ENCODE measurements at regions of chr1 and their contacts with region 1.

Region 1: DNA sequence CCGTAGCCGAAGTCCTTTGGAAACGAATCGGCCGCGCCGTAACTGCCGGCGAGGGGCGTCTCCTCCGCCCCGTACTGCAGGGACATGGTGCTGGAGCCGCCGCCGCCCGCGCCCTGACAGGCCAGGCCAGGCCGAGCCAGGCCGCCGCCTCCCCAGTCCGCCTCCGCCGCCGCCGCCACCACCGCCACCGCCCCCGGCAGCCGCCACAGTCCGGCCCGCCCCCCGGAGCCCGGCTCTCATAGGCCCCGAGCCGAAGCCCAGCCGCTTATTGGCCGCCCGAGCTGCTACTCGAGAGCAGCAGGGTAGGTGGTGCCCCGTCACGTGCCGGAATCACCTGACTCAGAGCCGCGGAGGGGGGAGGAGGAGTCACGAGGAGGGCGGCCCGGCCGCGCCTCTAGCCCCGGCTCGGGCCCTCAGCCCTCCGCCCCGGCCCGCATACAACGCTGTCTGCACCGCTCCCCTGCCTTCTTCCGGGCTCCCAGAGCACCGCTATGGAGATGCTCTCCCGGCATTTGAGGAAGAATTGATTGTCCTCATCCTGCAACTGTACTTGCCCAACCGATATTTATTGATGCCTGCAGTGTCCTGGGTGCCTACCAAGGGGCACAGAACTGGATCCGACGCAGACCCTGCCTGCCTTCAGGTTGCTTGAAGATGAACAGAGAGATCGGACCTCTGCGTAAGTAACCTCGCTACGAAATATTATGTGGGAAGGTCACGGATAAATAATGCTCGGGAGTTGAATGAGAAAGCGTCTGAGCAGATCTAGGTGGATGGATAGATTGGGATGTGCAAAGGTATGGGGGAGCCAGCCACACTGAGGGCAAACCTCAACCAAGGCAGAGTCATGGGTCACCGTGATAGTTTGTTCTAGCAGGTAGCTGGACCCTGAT is at the start of gene RRAGC:
- DNase-seq: peak; percentile 100
- ATAC-seq: peak; percentile 96 to 99 (median 98)
- H3K4me3 ChIP-seq: peak within 1 kb of the TSS; percentile 81 to 99 (median 92)
- H3K27ac ChIP-seq: peak within 1 kb of the TSS; percentile 56 to 96 (median 88)
- H3K4me1 ChIP-seq: peaks cover 2 to 75% (median 48%) of the 10 kb centered on the region in 12 donors
- H3K27me3 ChIP-seq: no peaks in the 10 kb centered on the region
- CTCF ChIP-seq: no peak
- POLR2A ChIP-seq: peak in 1 of 2 donors; percentile 63
- total RNA-seq, gene RRAGC: 14.4 to 32.8 (median 22.3) TPM

Region 2: GRCh38 chr1:38990738-38991639 is 131.2 kb after region 1 on chr1 and contains the start of gene AKIRIN1:
- intact Hi-C with region 1: loop called in 3 of 10 experiments (anchors 5 to 10 kb)
- DNase-seq: peak; percentile 98 to 100 (median 99)
- ATAC-seq: peak; percentile 97 to 99 (median 98)
- H3K4me3 ChIP-seq: peak within 1 kb of the TSS; percentile 69 to 100 (median 96)
- H3K27ac ChIP-seq: peak within 1 kb of the TSS; percentile 81 to 99 (median 94)
- H3K4me1 ChIP-seq: peaks cover 0 to 44% (median 23%) of the 10 kb centered on the region in 12 donors
- H3K27me3 ChIP-seq: no peaks in the 10 kb centered on the region
- CTCF ChIP-seq: peak in 9 of 12 donors; percentile 8 to 66 (median 37)
- POLR2A ChIP-seq: peak; percentile 94 to 98
- total RNA-seq, gene AKIRIN1: 42.5 to 68.1 (median 59.1) TPM

Region 3: GRCh38 chr1:39003794-39004193 is 144.0 kb after region 1 on chr1:
- intact Hi-C with region 1: loop called in 2 of 10 experiments (anchors 10 kb)
- DNase-seq: no peak
- ATAC-seq: no peak
- H3K4me3 ChIP-seq: no peak overlapping the region
- H3K27ac ChIP-seq: peak overlapping the region in 10 of 12 donors; percentile 45 to 76 (median 62)
- H3K4me1 ChIP-seq: peaks cover 0 to 24% (median 14%) of the 10 kb centered on the region in 12 donors
- H3K27me3 ChIP-seq: no peaks in the 10 kb centered on the region
- CTCF ChIP-seq: no peak
- POLR2A ChIP-seq: no peak

Region 4: GRCh38 chr1:39026051-39026865 is 166.5 kb after region 1 on chr1 and contains the start of gene NDUFS5:
- intact Hi-C with region 1: loop called in 1 of 10 experiments (anchors 2 kb)
- DNase-seq: peak; percentile 89 to 95 (median 93)
- ATAC-seq: peak; percentile 95 to 96 (median 96)
- H3K4me3 ChIP-seq: peak within 1 kb of the TSS; percentile 50 to 87 (median 80)
- H3K27ac ChIP-seq: peak within 1 kb of the TSS; percentile 82 to 99 (median 94)
- H3K4me1 ChIP-seq: peaks cover 0 to 25% (median 10%) of the 10 kb centered on the region in 12 donors
- H3K27me3 ChIP-seq: no peaks in the 10 kb centered on the region
- CTCF ChIP-seq: no peak
- POLR2A ChIP-seq: peak; percentile 79 to 89
- total RNA-seq, gene NDUFS5: 292 to 1,815 (median 503) TPM

Region 5: DNA sequence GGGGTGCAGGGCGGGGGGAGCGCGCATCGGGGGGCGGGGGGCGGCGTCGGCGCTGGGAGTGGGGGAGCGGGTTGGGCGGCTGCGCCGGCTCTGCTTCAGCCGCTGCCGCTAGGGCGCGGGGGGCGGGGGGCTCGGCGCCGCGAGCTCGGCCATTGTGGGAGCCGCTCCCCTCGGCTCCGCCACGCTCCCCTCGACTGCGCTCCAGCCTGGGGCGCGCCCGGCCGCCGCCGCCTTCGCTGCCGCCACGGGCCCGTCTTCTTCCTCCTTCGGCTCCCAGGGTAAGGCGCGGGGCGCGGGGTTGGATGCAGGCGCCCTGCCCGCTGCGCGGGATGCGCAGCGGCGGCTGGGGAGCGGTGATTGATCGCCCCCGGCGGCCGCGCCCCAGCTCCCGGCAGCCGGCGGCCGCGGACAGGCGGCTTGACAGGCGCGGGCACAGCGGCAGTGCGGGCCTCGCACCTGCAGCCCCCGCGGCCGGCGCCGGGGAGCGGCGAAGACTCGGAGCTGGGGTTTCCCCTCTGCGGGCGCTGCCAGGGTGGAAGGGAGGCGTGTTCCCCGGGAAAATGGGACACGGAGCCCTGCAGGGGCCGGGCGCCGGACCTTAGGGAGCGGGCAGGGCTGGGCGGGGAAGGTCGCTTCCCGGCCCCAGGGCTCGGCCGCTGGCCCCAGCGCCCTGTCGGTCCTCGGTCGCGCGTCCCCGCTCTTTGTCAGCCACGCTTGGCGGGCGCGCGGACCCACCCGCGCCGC is 221.6 kb after region 1 on chr1:
- intact Hi-C with region 1: loop called in 4 of 10 experiments (anchors 5 to 10 kb)
- DNase-seq: no peak
- ATAC-seq: peak in 2 of 4 donors; percentile 39 to 46
- H3K4me3 ChIP-seq: peak overlapping the region; percentile 31 to 83 (median 60)
- H3K27ac ChIP-seq: peak overlapping the region in 2 of 12 donors; percentile 13 to 19
- H3K4me1 ChIP-seq: peaks cover 0 to 26% (median 12%) of the 10 kb centered on the region in 12 donors
- H3K27me3 ChIP-seq: peaks cover 0 to 29% (median 5%) of the 10 kb centered on the region in 9 donors
- CTCF ChIP-seq: no peak
- POLR2A ChIP-seq: no peak

Region 6: GRCh38 chr1:39091845-39092645 is 232.2 kb after region 1 on chr1:
- intact Hi-C with region 1: loop called in 5 of 10 experiments (anchors 2 to 10 kb)
- DNase-seq: peak in 4 of 5 donors; percentile 66 to 82 (median 72)
- ATAC-seq: peak; percentile 44 to 79 (median 73)
- H3K4me3 ChIP-seq: no peak overlapping the region
- H3K27ac ChIP-seq: no peak overlapping the region
- H3K4me1 ChIP-seq: peaks cover 0 to 34% (median 6%) of the 10 kb centered on the region in 12 donors
- H3K27me3 ChIP-seq: no peaks in the 10 kb centered on the region
- CTCF ChIP-seq: peak; percentile 48 to 86 (median 66)
- POLR2A ChIP-seq: no peak

Measured in heart left ventricle (tissue), 16 donors.